ENCODE measurements at regions of chr2 and their contacts with region 1.

Region 1: DNA sequence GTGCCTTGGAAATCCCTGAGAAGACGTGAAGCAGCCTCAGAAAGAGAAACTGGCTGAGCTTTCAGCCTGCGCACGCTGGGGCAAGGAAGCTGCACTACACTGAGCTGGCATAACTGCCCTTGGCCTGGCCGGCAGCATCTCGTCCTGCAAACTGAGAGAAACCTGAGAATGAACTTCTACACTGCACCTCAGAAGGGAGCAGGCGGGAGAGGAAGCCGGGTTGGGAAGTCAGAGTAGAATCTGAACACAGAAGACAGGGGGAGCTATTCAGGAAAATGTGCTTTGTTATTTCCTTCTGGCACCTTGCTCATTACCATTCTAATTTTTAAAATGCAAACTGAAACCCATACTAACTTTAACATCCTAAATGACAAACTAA is 70.9 kb downstream of the ZEB2 start:
- DNase-seq: no peak

Region 2: GRCh38 chr2:146193619-146194018 is 1744.6 kb after region 1 on chr2:
- intact Hi-C with region 1: loop called in 1 of 2 experiments (anchors 5 kb)
- DNase-seq: no peak

Measured in posterior vena cava (tissue), 2 donors.